Left colon (tissue), 2 donors: ENCODE measurements at regions of chr7 and their contacts with region 1.

Region 1: DNA sequence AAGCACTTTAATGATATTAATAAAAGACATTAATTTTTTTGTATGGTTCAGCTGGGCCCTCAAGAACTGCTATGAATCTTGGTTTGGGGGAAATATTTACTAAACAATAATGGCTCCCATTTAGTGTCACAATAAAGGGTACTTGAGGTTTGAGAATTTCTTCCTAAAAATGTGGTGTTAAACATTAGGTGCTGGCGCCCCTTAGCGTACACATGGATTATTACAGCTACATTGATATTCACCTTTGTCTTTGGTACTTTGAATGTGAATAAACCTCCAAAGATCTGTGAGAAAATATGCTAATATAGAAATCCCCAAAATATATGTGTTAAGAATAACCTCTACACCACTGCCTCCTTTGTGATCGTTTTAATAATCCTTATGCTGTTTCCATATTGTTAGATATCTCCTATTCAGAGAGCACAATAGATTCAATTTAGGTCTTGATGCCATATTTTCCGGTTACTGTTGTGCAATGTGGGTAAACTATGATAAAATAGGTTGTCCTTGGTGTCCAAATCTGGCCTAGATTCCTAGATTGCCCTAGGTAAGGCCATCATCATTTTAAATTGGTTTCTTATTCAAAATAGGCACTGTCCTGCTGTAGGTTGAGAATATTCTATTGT is 161.8 kb upstream of the CACNA2D1 start:
- DNase-seq: no peak
- ATAC-seq: no peak

Region 2: GRCh38 chr7:82729172-82730030 is 124.0 kb after region 1 on chr7:
- intact Hi-C with region 1: loop called in 1 of 2 experiments (anchors 10 kb)
- DNase-seq: no peak
- ATAC-seq: no peak